ENCODE measurements at regions of chr11 and their contacts with region 1.

Region 1: GRCh38 chr11:63567044-63567840 is 4.1 kb upstream of the PLAAT2 start:
- DNase-seq: peak; percentile 73
- H3K4me3 Mint-ChIP-seq: peak overlapping the region; percentile 64
- H3K27ac Mint-ChIP-seq: peak overlapping the region; percentile 79
- H3K4me1 Mint-ChIP-seq: peaks cover 41% of the 10 kb centered on the region
- H3K27me3 Mint-ChIP-seq: no peaks in the 10 kb centered on the region

Region 2: DNA sequence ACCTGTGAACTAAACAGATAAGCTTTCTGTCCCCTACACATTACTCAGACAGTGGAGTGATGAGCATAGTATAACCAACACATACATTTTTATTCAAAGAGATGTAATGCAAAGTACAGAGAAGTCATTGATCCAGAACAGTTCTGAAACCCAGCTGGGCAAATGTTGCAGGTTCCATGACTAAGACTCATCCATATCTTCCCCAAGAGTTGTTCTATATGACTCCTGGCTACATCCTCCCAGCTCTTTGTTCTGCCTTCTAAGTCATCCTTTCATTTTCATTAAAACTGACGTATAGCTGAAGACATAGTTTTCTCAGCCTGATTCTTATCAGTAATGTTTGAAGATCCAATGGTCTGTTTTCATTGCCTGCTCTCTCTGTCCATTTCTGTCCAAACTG is 123.5 kb before region 1 on chr11:
- CTCF ChIA-PET with region 1: no interaction called
- intact Hi-C with region 1: loop called (anchors 1 kb)
- DNase-seq: peak; percentile 44
- H3K4me3 Mint-ChIP-seq: no peak overlapping the region
- H3K27ac Mint-ChIP-seq: no peak overlapping the region
- H3K4me1 Mint-ChIP-seq: peaks cover 20% of the 10 kb centered on the region
- H3K27me3 Mint-ChIP-seq: no peaks in the 10 kb centered on the region

Region 3: GRCh38 chr11:63553741-63554151 is 13.5 kb before region 1 on chr11:
- CTCF ChIA-PET with region 1: no interaction called
- intact Hi-C with region 1: loop called (anchors 1 kb)
- DNase-seq: peak; percentile 77
- H3K4me3 Mint-ChIP-seq: peak overlapping the region; percentile 59
- H3K27ac Mint-ChIP-seq: peak overlapping the region; percentile 83
- H3K4me1 Mint-ChIP-seq: peaks cover 48% of the 10 kb centered on the region
- H3K27me3 Mint-ChIP-seq: no peaks in the 10 kb centered on the region

Region 4: DNA sequence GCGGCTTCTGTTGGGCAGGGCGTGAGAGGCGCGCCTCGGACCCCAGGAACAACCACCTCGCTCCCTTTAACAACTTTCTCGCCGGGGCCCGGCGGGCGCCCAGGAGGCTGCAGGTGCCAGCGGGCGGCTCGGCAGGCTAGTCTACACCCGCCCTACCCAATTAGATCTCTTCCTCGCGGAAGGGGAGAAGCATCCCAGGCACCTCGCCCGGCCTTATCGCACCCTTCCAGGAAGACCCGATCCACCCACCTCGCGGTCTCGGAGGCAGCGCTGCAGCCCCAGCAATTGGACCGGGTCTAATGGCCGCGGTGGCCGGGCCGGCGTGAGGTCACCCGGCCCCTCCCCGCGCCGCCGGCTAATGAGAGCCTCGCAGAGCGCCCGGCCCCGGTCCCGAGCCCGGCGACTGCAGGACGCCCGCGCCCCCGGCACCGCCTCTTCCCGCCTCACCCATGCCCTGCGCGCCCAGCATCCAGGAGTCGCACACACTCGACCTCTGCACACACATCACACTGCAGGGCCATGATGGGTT is 47.0 kb after region 1 on chr11 and contains the start of gene PLAAT3:
- CTCF ChIA-PET with region 1: no interaction called
- intact Hi-C with region 1: loop called (anchors 5 kb)
- DNase-seq: peak; percentile 40
- H3K4me3 Mint-ChIP-seq: peak within 1 kb of the TSS; percentile 80
- H3K27ac Mint-ChIP-seq: no peak within 1 kb of the TSS
- H3K4me1 Mint-ChIP-seq: peaks cover 5% of the 10 kb centered on the region
- H3K27me3 Mint-ChIP-seq: no peaks in the 10 kb centered on the region
- total RNA-seq, gene PLAAT3: 3.5 to 3.7 TPM

Region 5: DNA sequence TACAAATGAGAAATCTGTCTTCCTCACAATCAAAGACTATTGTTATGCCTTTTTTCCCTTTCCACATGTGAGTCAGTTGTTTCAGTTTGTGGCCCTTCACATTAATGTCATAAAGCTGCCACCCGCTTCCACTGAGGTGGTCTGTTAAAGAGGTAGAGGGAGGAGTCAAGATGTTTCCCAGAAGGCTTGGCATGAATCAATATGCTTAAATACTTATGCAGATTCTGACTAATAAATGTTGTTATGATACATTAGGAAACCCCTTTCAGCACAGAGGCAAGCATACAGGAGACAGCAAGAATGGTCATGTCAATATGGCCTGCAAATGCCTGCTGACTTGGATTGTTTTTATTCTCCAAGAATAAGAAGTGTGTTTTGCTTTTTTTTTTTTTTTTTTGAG is 120.6 kb after region 1 on chr11:
- CTCF ChIA-PET with region 1: no interaction called
- intact Hi-C with region 1: loop called (anchors 1 kb)
- DNase-seq: peak; percentile 49
- H3K4me3 Mint-ChIP-seq: no peak overlapping the region
- H3K27ac Mint-ChIP-seq: no peak overlapping the region
- H3K4me1 Mint-ChIP-seq: peaks cover 26% of the 10 kb centered on the region
- H3K27me3 Mint-ChIP-seq: no peaks in the 10 kb centered on the region